Calu3 (cell line): ENCODE measurements at regions of chr14 and their contacts with region 1.

Region 1: DNA sequence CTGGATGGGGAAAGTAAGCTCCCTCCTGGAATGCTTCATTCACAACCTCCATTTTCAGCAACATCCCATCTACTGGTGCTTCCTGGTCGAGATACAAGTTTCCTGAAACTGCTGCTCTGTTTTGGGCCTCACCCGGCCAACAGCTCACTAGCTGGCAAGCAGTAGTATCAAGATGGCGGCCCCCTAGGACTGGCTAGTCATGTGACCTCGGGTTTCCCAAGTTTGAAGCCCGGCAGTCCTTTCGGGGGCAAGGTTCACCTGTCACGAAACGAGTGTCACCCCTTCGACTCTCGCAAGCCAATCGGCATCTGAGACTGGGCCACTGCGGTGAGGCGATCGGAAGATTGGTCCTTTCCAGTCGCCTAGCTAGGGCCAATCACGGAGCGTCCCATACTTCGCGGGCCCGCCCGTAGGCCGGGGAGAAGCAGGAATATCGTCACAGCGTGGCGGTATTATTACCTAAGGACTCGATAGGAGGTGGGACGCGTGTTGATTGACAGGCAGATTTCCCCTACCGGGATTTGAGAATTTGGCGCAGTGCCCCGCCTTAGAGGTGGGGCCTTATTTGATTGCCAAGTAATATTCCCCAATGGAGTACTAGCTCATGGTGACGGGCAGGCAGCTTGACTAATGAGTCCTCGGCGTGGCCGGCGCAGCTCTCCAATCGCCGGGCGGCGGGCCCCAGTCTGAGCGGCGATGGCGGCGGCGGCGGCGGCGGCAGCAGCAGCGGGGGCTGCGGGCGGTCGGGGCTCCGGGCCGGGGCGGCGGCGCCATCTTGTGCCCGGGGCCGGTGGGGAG is at the start of gene PABPN1:
- DNase-seq: peak; percentile 95
- H3K4me3 Mint-ChIP-seq: peak within 1 kb of the TSS; percentile 92
- H3K27ac Mint-ChIP-seq: peak within 1 kb of the TSS; percentile 92
- H3K4me1 Mint-ChIP-seq: peaks cover 11% of the 10 kb centered on the region
- H3K27me3 Mint-ChIP-seq: no peaks in the 10 kb centered on the region
- CTCF ChIP-seq: no peak
- total RNA-seq, gene PABPN1: 173 and 181 TPM in 2 replicates

Region 2: GRCh38 chr14:22852940-22853767 is 467.8 kb before region 1 on chr14:
- CTCF ChIA-PET with region 1: no interaction called
- intact Hi-C with region 1: no loop called
- DNase-seq: peak; percentile 91
- H3K4me3 Mint-ChIP-seq: peak overlapping the region; percentile 52
- H3K27ac Mint-ChIP-seq: peak overlapping the region; percentile 51
- H3K4me1 Mint-ChIP-seq: no peaks in the 10 kb centered on the region
- H3K27me3 Mint-ChIP-seq: no peaks in the 10 kb centered on the region
- CTCF ChIP-seq: peak; percentile 77

Region 3: GRCh38 chr14:23306410-23307145 is 14.4 kb before region 1 on chr14 and contains the start of gene BCL2L2:
- CTCF ChIA-PET with region 1: interaction called, 12 read pairs
- intact Hi-C with region 1: no loop called
- DNase-seq: peak; percentile 87
- H3K4me3 Mint-ChIP-seq: peak within 1 kb of the TSS; percentile 91
- H3K27ac Mint-ChIP-seq: peak within 1 kb of the TSS; percentile 85
- H3K4me1 Mint-ChIP-seq: peaks cover 23% of the 10 kb centered on the region
- H3K27me3 Mint-ChIP-seq: no peaks in the 10 kb centered on the region
- CTCF ChIP-seq: no peak
- total RNA-seq, gene BCL2L2: 19.0 and 21.3 TPM in 2 replicates

Region 4: GRCh38 chr14:23555882-23556699 is 235.1 kb after region 1 on chr14 and contains the start of gene THTPA:
- CTCF ChIA-PET with region 1: no interaction called
- intact Hi-C with region 1: loop called (anchors 10 kb)
- DNase-seq: peak; percentile 89
- H3K4me3 Mint-ChIP-seq: peak within 1 kb of the TSS; percentile 89
- H3K27ac Mint-ChIP-seq: peak within 1 kb of the TSS; percentile 92
- H3K4me1 Mint-ChIP-seq: peaks cover 30% of the 10 kb centered on the region
- H3K27me3 Mint-ChIP-seq: no peaks in the 10 kb centered on the region
- CTCF ChIP-seq: no peak
- total RNA-seq, gene THTPA: 15.4 and 18.3 TPM in 2 replicates